ENCODE measurements at regions of chr9 and their contacts with region 1.

Region 1: GRCh38 chr9:34158362-34158869 is 20.4 kb upstream of the UBAP1 start:
- DNase-seq: peak; percentile 75
- ATAC-seq: peak; percentile 81
- H3K4me3 ChIP-seq: no peak overlapping the region
- H3K27ac ChIP-seq: peak overlapping the region; percentile 60
- H3K4me1 ChIP-seq: peaks cover 20% of the 10 kb centered on the region
- H3K27me3 ChIP-seq: no peaks in the 10 kb centered on the region
- CTCF ChIP-seq: no peak

Region 2: GRCh38 chr9:34119713-34120112 is 38.7 kb before region 1 on chr9:
- CTCF ChIA-PET with region 1: interaction called, 17 read pairs
- POLR2A ChIA-PET with region 1: no interaction called
- intact Hi-C with region 1: no loop called
- DNase-seq: no peak
- ATAC-seq: no peak
- H3K4me3 ChIP-seq: no peak overlapping the region
- H3K27ac ChIP-seq: no peak overlapping the region
- H3K4me1 ChIP-seq: peaks cover 7% of the 10 kb centered on the region
- H3K27me3 ChIP-seq: no peaks in the 10 kb centered on the region
- CTCF ChIP-seq: no peak

Region 3: GRCh38 chr9:34256104-34256503 is 97.7 kb after region 1 on chr9:
- CTCF ChIA-PET with region 1: no interaction called
- POLR2A ChIA-PET with region 1: no interaction called
- intact Hi-C with region 1: no loop called
- DNase-seq: peak; percentile 5
- ATAC-seq: no peak
- H3K4me3 ChIP-seq: no peak overlapping the region
- H3K27ac ChIP-seq: no peak overlapping the region
- H3K4me1 ChIP-seq: peaks cover 29% of the 10 kb centered on the region
- H3K27me3 ChIP-seq: no peaks in the 10 kb centered on the region
- CTCF ChIP-seq: peak; percentile 49